HCT116 (cell line): ENCODE measurements at regions of chr3 and their contacts with region 1.

Region 1: DNA sequence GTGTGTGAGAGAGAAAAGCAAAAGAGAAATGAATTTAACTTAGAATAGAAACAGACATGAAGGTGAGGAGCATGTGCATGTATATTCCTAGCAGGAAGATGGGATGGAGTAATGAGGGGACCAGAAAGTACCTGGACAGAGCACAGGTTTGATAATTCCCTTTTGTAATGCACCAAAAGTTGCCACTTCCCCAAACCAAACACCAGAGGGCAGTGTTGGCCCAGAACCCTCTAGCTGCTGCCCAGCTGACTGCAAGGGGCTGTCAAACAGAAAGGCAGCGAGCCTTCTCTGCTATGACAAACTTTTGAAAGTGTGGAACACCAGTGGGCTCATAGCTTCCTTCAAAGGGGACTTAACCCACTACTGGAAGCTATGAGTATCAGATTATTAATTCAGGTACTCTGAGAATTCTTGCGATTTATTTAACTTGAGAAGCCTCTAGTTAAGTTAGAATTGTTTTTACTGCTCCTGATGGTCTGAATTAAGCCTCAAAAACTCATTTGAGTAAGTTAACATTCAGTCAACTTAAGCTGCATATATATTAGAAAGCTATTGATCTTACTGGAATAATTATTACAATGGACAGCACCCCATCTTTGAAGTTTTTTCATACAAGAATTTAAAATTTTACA is 234.9 kb downstream of the NEK10 start:
- DNase-seq: peak; percentile 54
- ATAC-seq: peak; percentile 95
- H3K4me3 ChIP-seq: no peak overlapping the region
- H3K27ac ChIP-seq: no peak overlapping the region
- H3K4me1 ChIP-seq: no peaks in the 10 kb centered on the region
- H3K27me3 ChIP-seq: no peaks in the 10 kb centered on the region
- CTCF ChIP-seq: peak; percentile 82 to 90 (median 87)
- POLR2A ChIP-seq: no peak
- RAD21 ChIP-seq: peak; percentile 95

Region 2: GRCh38 chr3:26827169-26827568 is 307.1 kb before region 1 on chr3:
- CTCF ChIA-PET with region 1: no interaction called
- POLR2A ChIA-PET with region 1: no interaction called
- RAD21 ChIA-PET with region 1: no interaction called
- intact Hi-C with region 1: no loop called
- DNase-seq: no peak
- ATAC-seq: no peak
- H3K4me3 ChIP-seq: no peak overlapping the region
- H3K27ac ChIP-seq: no peak overlapping the region
- H3K4me1 ChIP-seq: no peaks in the 10 kb centered on the region
- H3K27me3 ChIP-seq: no peaks in the 10 kb centered on the region
- CTCF ChIP-seq: no peak
- POLR2A ChIP-seq: no peak
- RAD21 ChIP-seq: no peak

Region 3: DNA sequence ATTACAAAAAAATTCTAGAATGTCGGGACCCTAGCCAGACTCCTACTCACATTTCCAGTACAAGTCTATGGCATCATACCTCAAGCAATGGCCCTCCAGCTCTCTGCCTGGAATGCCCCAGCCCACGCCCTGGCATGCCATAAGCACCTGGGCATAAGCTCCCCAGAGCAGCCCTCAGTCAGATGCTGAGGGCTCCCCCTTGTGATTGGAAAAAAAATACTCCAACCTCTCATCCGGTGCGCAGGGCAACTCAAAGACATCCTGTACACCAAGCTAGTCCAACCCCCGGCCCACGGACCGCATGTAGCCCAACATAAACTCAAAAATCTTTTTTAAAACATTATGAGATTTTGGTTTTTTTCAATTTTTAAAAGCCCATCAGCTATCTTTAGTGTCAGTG is 119.5 kb after region 1 on chr3:
- CTCF ChIA-PET with region 1: interaction called, 57 read pairs
- POLR2A ChIA-PET with region 1: no interaction called
- RAD21 ChIA-PET with region 1: interaction called, 7 to 9 read pairs
- intact Hi-C with region 1: loop called (anchors 1 kb)
- DNase-seq: peak; percentile 51
- ATAC-seq: peak; percentile 100
- H3K4me3 ChIP-seq: no peak overlapping the region
- H3K27ac ChIP-seq: no peak overlapping the region
- H3K4me1 ChIP-seq: no peaks in the 10 kb centered on the region
- H3K27me3 ChIP-seq: no peaks in the 10 kb centered on the region
- CTCF ChIP-seq: peak; percentile 62 to 71 (median 64); a peak in 5 of 6 replicates
- POLR2A ChIP-seq: no peak
- RAD21 ChIP-seq: peak; percentile 85

Region 4: GRCh38 chr3:27279123-27279522 is 144.8 kb after region 1 on chr3:
- CTCF ChIA-PET with region 1: no interaction called
- POLR2A ChIA-PET with region 1: no interaction called
- RAD21 ChIA-PET with region 1: interaction called in 1 of 2 experiments, 3 read pairs
- intact Hi-C with region 1: loop called (anchors 1 kb)
- DNase-seq: no peak
- ATAC-seq: 0 out of 2 replicates have a peak, but pooled peaks have one; percentile 50
- H3K4me3 ChIP-seq: no peak overlapping the region
- H3K27ac ChIP-seq: no peak overlapping the region
- H3K4me1 ChIP-seq: no peaks in the 10 kb centered on the region
- H3K27me3 ChIP-seq: no peaks in the 10 kb centered on the region
- CTCF ChIP-seq: peak; percentile 27 to 46 (median 36); a peak in 5 of 6 replicates
- POLR2A ChIP-seq: no peak
- RAD21 ChIP-seq: peak; percentile 56

Region 5: DNA sequence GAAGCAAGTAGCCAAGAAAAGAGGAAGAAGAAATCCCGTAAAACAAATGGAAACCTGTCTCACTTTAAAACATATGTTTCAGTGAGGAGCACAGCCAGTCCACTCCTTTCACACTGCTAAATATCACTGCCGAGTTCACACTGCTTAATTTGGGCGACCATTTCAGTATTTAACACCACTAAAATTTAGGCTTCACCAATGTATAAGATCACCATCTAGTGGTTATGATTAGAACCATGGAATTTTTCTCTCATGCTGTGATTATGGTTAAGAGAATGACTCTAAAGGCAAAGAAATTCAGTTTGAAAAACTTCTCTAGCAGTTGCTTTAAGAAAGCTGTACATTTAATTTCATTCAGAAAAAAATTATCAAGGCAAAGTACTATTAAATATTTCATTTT is 333.3 kb after region 1 on chr3:
- CTCF ChIA-PET with region 1: no interaction called
- POLR2A ChIA-PET with region 1: no interaction called
- RAD21 ChIA-PET with region 1: no interaction called
- intact Hi-C with region 1: loop called (anchors 2 kb)
- DNase-seq: no peak
- ATAC-seq: peak; percentile 82
- H3K4me3 ChIP-seq: no peak overlapping the region
- H3K27ac ChIP-seq: no peak overlapping the region
- H3K4me1 ChIP-seq: peaks cover 3 to 23% of the 10 kb centered on the region in 2 experiments; a peak in 3 of 4 replicates
- H3K27me3 ChIP-seq: no peaks in the 10 kb centered on the region
- CTCF ChIP-seq: peak; percentile 38 to 70 (median 56); a peak in 3 of 6 replicates
- POLR2A ChIP-seq: no peak
- RAD21 ChIP-seq: peak; percentile 63

Region 6: GRCh38 chr3:27500051-27500450 is 365.8 kb after region 1 on chr3:
- CTCF ChIA-PET with region 1: no interaction called
- POLR2A ChIA-PET with region 1: no interaction called
- RAD21 ChIA-PET with region 1: no interaction called
- intact Hi-C with region 1: no loop called
- DNase-seq: no peak
- ATAC-seq: no peak
- H3K4me3 ChIP-seq: no peak overlapping the region
- H3K27ac ChIP-seq: no peak overlapping the region
- H3K4me1 ChIP-seq: no peaks in the 10 kb centered on the region
- H3K27me3 ChIP-seq: no peaks in the 10 kb centered on the region
- CTCF ChIP-seq: no peak
- POLR2A ChIP-seq: no peak
- RAD21 ChIP-seq: no peak

Region 7: DNA sequence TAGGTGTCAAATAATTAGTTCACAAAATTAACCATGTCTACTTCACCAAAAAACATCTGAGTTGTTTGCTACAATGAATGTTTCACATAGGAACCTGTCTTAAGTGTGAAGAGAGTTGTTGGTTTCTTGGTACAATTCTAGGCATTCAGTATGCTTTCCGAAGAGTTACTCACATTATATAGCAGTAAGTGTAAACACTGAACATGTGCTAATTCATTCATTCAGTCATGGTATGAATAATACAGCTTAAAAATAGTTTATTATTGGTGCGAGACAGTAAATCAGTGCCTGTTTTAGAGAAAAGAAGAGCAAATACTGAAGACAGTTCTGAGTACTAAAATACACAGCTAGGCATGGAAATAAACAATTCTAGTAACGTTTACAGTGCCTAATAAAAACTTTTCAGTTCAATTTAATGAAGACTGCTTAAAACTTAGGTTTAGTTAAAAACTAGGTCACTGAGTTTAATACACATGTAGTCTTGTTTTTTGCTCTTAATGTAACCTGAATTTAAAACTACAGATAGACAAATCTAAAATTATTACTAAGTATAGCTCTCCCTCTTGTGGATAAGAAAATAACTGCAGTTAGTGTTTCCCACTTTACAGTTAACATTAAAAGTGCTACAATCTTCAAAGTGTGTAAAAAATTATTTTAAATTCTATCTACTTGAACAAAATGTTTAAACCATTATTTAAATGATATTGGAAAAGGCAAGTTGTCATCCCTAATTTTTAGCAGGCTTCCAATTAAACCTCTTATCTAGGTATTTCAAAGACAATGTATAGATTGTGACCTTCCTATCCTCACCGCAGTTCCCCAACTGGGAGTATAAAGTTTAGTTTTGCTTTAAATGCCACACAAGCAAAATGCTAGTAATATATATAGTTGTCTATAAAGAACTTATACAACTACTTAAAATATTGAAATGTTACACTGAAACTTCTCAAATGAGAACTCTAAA is 1194.2 kb after region 1 on chr3:
- CTCF ChIA-PET with region 1: interaction called, 4 read pairs
- POLR2A ChIA-PET with region 1: no interaction called
- RAD21 ChIA-PET with region 1: no interaction called
- intact Hi-C with region 1: loop called (anchors 5 kb)
- DNase-seq: no peak
- ATAC-seq: peak; percentile 32; the same call in 1 of the 2 replicates
- H3K4me3 ChIP-seq: no peak overlapping the region
- H3K27ac ChIP-seq: no peak overlapping the region
- H3K4me1 ChIP-seq: no peaks in the 10 kb centered on the region
- H3K27me3 ChIP-seq: no peaks in the 10 kb centered on the region
- CTCF ChIP-seq: peak; percentile 25 to 75 (median 37); a peak in 3 of 6 replicates
- POLR2A ChIP-seq: no peak
- RAD21 ChIP-seq: peak; percentile 69